Endothelial cell of umbilical vein (primary cell): ENCODE measurements at regions of chr15 and their contacts with region 1.

Region 1: GRCh38 chr15:89794627-89795241 is 18.6 kb downstream of the MESP2 start:
- DNase-seq: peak; percentile 95
- H3K4me3 ChIP-seq: no peak overlapping the region
- H3K27ac ChIP-seq: peak overlapping the region; percentile 52
- H3K4me1 ChIP-seq: peaks cover 19% of the 10 kb centered on the region
- H3K27me3 ChIP-seq: no peaks in the 10 kb centered on the region
- CTCF ChIP-seq: no peak
- POLR2A ChIP-seq: no peak

Region 2: DNA sequence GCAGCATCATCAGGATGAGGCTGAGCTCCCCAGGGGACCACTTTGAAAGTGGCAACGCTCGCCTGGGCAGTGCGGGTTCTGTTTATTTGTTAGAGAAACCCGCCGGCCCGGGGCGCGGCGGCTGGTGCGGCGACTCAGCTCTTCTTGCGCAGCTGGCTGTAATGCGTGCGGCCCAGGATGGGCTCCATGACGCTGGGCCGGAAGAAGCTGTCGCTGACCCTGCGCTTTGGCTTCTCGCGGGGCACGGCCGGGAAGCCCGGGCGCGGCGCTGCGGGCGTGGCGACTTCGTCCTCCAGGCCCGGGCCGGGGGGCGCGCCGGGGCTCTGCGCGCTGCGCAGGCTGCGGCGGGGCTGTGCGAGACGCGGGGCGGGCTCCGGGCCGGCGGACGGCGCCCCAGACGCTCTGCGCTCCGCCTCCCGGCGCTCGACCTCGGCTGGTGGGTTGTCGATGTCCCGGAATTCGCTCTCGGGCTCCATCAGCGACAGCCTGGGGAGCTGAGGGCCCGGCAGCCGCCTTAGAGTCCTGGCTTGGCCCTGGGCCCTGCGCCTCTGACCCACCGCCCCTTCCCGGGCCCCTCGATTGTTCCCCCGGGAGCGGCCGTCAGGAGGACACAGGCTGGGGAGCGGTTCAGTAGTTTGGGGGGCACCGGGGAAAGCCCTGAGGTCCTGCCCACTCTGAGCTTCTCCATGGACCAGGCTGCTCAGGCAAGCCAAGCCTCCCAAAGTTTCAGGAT is 129.1 kb before region 1 on chr15:
- CTCF ChIA-PET with region 1: no interaction called
- POLR2A ChIA-PET with region 1: no interaction called
- dilution Hi-C with region 1: no loop called
- intact Hi-C with region 1: no loop called
- DNase-seq: peak; percentile 36
- H3K4me3 ChIP-seq: peak overlapping the region in 2 of 3 experiments; percentile 30 to 33
- H3K27ac ChIP-seq: no peak overlapping the region
- H3K4me1 ChIP-seq: peaks cover 20% of the 10 kb centered on the region
- H3K27me3 ChIP-seq: no peaks in the 10 kb centered on the region
- CTCF ChIP-seq: no peak
- POLR2A ChIP-seq: peak; percentile 66

Region 3: GRCh38 chr15:89776274-89777072 is 18.3 kb before region 1 on chr15 and contains the start of gene MESP2:
- CTCF ChIA-PET with region 1: interaction called, 3 read pairs
- POLR2A ChIA-PET with region 1: no interaction called
- dilution Hi-C with region 1: no loop called
- intact Hi-C with region 1: loop called (anchors 2 kb)
- DNase-seq: peak; percentile 88
- H3K4me3 ChIP-seq: peak within 1 kb of the TSS in 2 of 3 experiments; percentile 4 to 30
- H3K27ac ChIP-seq: no peak within 1 kb of the TSS
- H3K4me1 ChIP-seq: peaks cover 6% of the 10 kb centered on the region
- H3K27me3 ChIP-seq: no peaks in the 10 kb centered on the region
- CTCF ChIP-seq: peak; percentile 55 to 73
- POLR2A ChIP-seq: no peak
- total RNA-seq, gene MESP2: 0.42 TPM in 1 of 2 replicates, not detected in the other

Region 4: GRCh38 chr15:89812011-89812835 is 17.5 kb after region 1 on chr15:
- CTCF ChIA-PET with region 1: interaction called, 4 read pairs
- POLR2A ChIA-PET with region 1: interaction called, 3 read pairs
- dilution Hi-C with region 1: no loop called
- intact Hi-C with region 1: loop called (anchors 2 kb)
- DNase-seq: no peak
- H3K4me3 ChIP-seq: no peak overlapping the region
- H3K27ac ChIP-seq: no peak overlapping the region
- H3K4me1 ChIP-seq: peaks cover 36% of the 10 kb centered on the region
- H3K27me3 ChIP-seq: no peaks in the 10 kb centered on the region
- CTCF ChIP-seq: no peak
- POLR2A ChIP-seq: no peak

Region 5: DNA sequence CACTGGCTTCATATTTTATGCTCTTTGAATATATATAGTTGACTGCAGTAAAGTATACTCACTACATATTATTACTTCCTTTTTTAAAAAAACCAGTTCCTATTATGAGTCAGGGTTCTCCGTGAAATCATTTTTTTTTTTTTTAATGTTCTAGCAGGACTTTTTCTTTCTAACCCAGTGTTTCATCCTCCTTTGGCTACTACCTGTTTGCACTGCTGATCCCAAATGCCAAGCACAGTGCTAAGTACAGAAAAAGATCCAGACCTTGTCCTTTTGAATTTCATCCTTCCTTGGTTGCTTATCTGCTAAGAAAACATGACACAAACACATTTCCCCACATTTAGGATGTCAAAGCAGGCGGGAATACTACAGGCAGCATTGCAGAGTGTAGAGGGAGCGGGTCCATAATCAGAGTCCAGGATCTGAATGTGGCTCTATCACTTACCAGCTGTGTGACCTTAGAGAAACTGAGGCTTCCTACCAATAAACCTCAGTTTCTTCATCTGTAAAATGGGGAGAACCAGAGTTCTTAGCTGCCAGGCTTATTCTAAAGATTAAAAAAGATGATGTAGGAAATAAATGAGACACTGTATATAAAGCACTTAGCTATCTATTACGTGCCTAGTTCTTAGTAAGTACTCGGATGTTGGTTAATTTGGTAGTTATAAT is 57.1 kb after region 1 on chr15:
- CTCF ChIA-PET with region 1: interaction called, 5 read pairs
- POLR2A ChIA-PET with region 1: interaction called, 3 read pairs
- dilution Hi-C with region 1: no loop called
- intact Hi-C with region 1: loop called (anchors 2 kb)
- DNase-seq: peak; percentile 59
- H3K4me3 ChIP-seq: no peak overlapping the region
- H3K27ac ChIP-seq: peak overlapping the region; percentile 68
- H3K4me1 ChIP-seq: peaks cover 37% of the 10 kb centered on the region
- H3K27me3 ChIP-seq: no peaks in the 10 kb centered on the region
- CTCF ChIP-seq: no peak
- POLR2A ChIP-seq: no peak

Region 6: DNA sequence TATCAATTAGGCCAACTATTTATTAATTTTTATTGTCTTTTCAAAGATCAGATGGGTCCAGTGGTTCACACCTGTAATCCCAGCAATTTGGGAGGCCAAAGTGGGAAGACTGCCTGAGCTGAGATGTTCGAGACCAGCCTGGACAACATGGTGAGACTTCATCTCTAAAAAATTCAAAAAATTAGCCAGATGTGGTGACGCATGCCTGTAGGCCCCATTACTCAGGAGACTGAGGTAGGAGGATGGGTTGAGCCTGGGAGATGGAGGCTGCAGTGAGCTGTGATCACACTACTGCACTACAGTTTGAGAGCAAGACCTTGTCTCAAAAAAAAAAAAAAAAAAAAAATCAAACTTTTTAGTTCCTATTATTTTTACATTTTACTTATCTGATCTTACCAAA is 90.9 kb after region 1 on chr15:
- CTCF ChIA-PET with region 1: no interaction called
- POLR2A ChIA-PET with region 1: no interaction called
- dilution Hi-C with region 1: no loop called
- intact Hi-C with region 1: no loop called
- DNase-seq: no peak
- H3K4me3 ChIP-seq: no peak overlapping the region
- H3K27ac ChIP-seq: no peak overlapping the region
- H3K4me1 ChIP-seq: peaks cover 4% of the 10 kb centered on the region
- H3K27me3 ChIP-seq: no peaks in the 10 kb centered on the region
- CTCF ChIP-seq: no peak
- POLR2A ChIP-seq: no peak

Region 7: DNA sequence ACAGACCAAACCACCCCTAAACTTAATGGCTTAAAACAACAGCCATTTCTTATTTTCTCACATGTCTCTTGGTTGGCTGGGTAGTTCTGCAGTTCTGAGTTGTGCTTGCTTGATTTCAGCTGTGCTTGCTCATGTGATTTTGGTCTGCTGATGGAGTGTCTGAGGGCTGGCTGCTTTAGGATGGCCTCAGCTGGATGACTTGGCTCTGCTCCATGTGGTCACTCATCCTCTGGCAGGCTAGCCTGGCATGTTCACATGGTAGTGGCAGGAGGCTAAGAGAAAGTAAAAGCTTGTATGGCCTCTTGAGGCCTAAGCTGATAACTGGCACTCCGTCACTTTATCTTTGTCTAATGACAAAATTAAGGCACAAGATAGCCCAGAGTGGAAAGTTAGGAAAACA is 1309.4 kb after region 1 on chr15:
- CTCF ChIA-PET with region 1: no interaction called
- POLR2A ChIA-PET with region 1: no interaction called
- dilution Hi-C with region 1: no loop called
- intact Hi-C with region 1: no loop called
- DNase-seq: no peak
- H3K4me3 ChIP-seq: no peak overlapping the region
- H3K27ac ChIP-seq: no peak overlapping the region
- H3K4me1 ChIP-seq: no peaks in the 10 kb centered on the region
- H3K27me3 ChIP-seq: peaks cover 20 to 32% of the 10 kb centered on the region in 2 experiments
- CTCF ChIP-seq: no peak
- POLR2A ChIP-seq: no peak